ENCODE measurements at regions of chrX and their contacts with region 1.

Region 1: GRCh38 chrX:149248073-149248625 is 257.0 kb downstream of the IDS start:
- DNase-seq: no peak
- H3K4me3 ChIP-seq: no peak overlapping the region
- H3K27ac ChIP-seq: no peak overlapping the region
- H3K4me1 ChIP-seq: no peaks in the 10 kb centered on the region
- H3K27me3 ChIP-seq: no peaks in the 10 kb centered on the region
- CTCF ChIP-seq: no peak
- EP300 ChIP-seq: no peak
- POLR2A ChIP-seq: no peak

Region 2: GRCh38 chrX:149223854-149224253 is 24.3 kb before region 1 on chrX:
- in situ Hi-C with region 1: no loop called
- intact Hi-C with region 1: loop called (anchors 1 kb)
- DNase-seq: no peak
- H3K4me3 ChIP-seq: no peak overlapping the region
- H3K27ac ChIP-seq: no peak overlapping the region
- H3K4me1 ChIP-seq: no peaks in the 10 kb centered on the region
- H3K27me3 ChIP-seq: no peaks in the 10 kb centered on the region
- CTCF ChIP-seq: no peak
- EP300 ChIP-seq: no peak
- POLR2A ChIP-seq: no peak

Measured in transverse colon (tissue), 4 donors.